Colonic mucosa (tissue), 4 donors: ENCODE measurements at regions of chr12 and their contacts with region 1.

Region 1: GRCh38 chr12:5083955-5084849 is 40.5 kb downstream of the KCNA5 start:
- DNase-seq: no peak
- H3K4me3 ChIP-seq: no peak overlapping the region
- H3K27ac ChIP-seq: no peak overlapping the region
- H3K4me1 ChIP-seq: no peaks in the 10 kb centered on the region
- H3K27me3 ChIP-seq: no peaks in the 10 kb centered on the region
- CTCF ChIP-seq: peak; percentile 45

Region 2: GRCh38 chr12:4857472-4858291 is 226.5 kb before region 1 on chr12:
- intact Hi-C with region 1: loop called (anchors 10 kb)
- DNase-seq: peak; percentile 80
- H3K4me3 ChIP-seq: peak overlapping the region; percentile 4
- H3K27ac ChIP-seq: no peak overlapping the region
- H3K4me1 ChIP-seq: peaks cover 3% of the 10 kb centered on the region
- H3K27me3 ChIP-seq: no peaks in the 10 kb centered on the region
- CTCF ChIP-seq: peak; percentile 87

Region 3: GRCh38 chr12:5022465-5023061 is 61.6 kb before region 1 on chr12:
- intact Hi-C with region 1: loop called (anchors 2 kb)
- DNase-seq: peak; percentile 22
- H3K4me3 ChIP-seq: no peak overlapping the region
- H3K27ac ChIP-seq: no peak overlapping the region
- H3K4me1 ChIP-seq: no peaks in the 10 kb centered on the region
- H3K27me3 ChIP-seq: no peaks in the 10 kb centered on the region
- CTCF ChIP-seq: peak; percentile 84